MCF 10A (cell line): ENCODE measurements at regions of chr19 and their contacts with region 1.

Region 1: GRCh38 chr19:29941828-29942403 is at the start of gene URI1:
- DNase-seq: peak; percentile 91
- H3K4me3 Mint-ChIP-seq: peak within 1 kb of the TSS; percentile 90
- H3K27ac Mint-ChIP-seq: peak within 1 kb of the TSS; percentile 69
- H3K4me1 Mint-ChIP-seq: peaks cover 19% of the 10 kb centered on the region
- H3K27me3 Mint-ChIP-seq: no peaks in the 10 kb centered on the region
- CTCF ChIP-seq: no peak
- total RNA-seq, gene URI1: 68.9 and 85.3 TPM in 2 replicates

Region 2: GRCh38 chr19:29811125-29812079 is 130.5 kb before region 1 on chr19 and contains the start of gene CCNE1:
- CTCF ChIA-PET with region 1: no interaction called
- POLR2A ChIA-PET with region 1: interaction called, 12 read pairs
- intact Hi-C with region 1: no loop called
- DNase-seq: peak; percentile 91
- H3K4me3 Mint-ChIP-seq: peak within 1 kb of the TSS; percentile 77
- H3K27ac Mint-ChIP-seq: peak within 1 kb of the TSS; percentile 68
- H3K4me1 Mint-ChIP-seq: peaks cover 11% of the 10 kb centered on the region
- H3K27me3 Mint-ChIP-seq: no peaks in the 10 kb centered on the region
- CTCF ChIP-seq: no peak
- total RNA-seq, gene CCNE1: 3.0 and 3.5 TPM in 2 replicates

Region 3: DNA sequence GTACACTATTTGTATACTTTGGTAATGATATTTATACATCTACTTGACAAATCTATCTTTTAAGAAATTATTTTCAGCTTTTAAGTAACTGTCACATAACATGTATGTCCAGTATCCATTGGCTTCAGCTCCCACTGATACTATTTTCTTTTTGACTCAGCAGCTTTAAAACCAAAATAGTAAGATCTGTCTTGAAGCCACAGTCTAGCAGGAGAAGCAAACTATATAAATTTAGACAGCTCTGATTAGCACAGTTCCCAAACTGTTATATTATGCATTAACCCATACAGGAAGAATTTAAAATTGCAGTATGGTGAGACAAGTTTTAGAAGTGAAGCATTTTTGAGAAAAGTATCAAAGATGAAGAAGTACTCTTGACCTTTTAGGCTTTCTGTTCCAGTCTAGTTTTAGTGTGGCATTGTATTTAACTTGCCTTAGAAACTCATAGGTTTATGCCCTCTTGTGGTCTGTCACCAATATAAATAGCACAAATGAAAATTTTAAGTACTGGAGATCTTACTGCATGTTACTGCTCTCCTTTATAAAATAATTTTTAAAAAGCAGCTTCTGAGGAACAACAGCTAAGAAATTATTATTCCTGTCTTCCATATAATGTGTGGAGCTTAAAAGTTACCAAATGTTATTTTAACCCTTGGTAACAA is 24.8 kb after region 1 on chr19:
- CTCF ChIA-PET with region 1: interaction called, 7 read pairs
- POLR2A ChIA-PET with region 1: interaction called, 8 read pairs
- intact Hi-C with region 1: loop called (anchors 2 kb)
- DNase-seq: peak; percentile 18
- H3K4me3 Mint-ChIP-seq: no peak overlapping the region
- H3K27ac Mint-ChIP-seq: no peak overlapping the region
- H3K4me1 Mint-ChIP-seq: peaks cover 36% of the 10 kb centered on the region
- H3K27me3 Mint-ChIP-seq: no peaks in the 10 kb centered on the region
- CTCF ChIP-seq: peak; percentile 17

Region 4: GRCh38 chr19:30111021-30111855 is 169.3 kb after region 1 on chr19:
- CTCF ChIA-PET with region 1: no interaction called
- POLR2A ChIA-PET with region 1: no interaction called
- intact Hi-C with region 1: no loop called
- DNase-seq: no peak
- H3K4me3 Mint-ChIP-seq: no peak overlapping the region
- H3K27ac Mint-ChIP-seq: no peak overlapping the region
- H3K4me1 Mint-ChIP-seq: no peaks in the 10 kb centered on the region
- H3K27me3 Mint-ChIP-seq: no peaks in the 10 kb centered on the region
- CTCF ChIP-seq: no peak